Activated T-helper 1 cell treated with anti-CD3 and anti-CD28 coated beads, Interleukin-12 subunit alpha, Interleukin-12 subunit beta, Interleukin-2, Interleukin-4 antibody, amounts not matched to agents 30 ng/mL and 10 ng/mL and 1 ng/mL, durations not matched to agents 14 hours and 24 hours and 36 hours (primary cell): ENCODE measurements at regions of chr11 and their contacts with region 1.

Region 1: GRCh38 chr11:124953753-124954589 is at the start of gene CCDC15:
- DNase-seq: peak; percentile 95
- H3K4me3 Mint-ChIP-seq: no peak within 1 kb of the TSS
- H3K27ac Mint-ChIP-seq: no peak within 1 kb of the TSS
- H3K4me1 Mint-ChIP-seq: no peaks in the 10 kb centered on the region
- H3K27me3 Mint-ChIP-seq: no peaks in the 10 kb centered on the region
- total RNA-seq, gene CCDC15: 3.1 and 3.4 TPM in 2 replicates

Region 2: DNA sequence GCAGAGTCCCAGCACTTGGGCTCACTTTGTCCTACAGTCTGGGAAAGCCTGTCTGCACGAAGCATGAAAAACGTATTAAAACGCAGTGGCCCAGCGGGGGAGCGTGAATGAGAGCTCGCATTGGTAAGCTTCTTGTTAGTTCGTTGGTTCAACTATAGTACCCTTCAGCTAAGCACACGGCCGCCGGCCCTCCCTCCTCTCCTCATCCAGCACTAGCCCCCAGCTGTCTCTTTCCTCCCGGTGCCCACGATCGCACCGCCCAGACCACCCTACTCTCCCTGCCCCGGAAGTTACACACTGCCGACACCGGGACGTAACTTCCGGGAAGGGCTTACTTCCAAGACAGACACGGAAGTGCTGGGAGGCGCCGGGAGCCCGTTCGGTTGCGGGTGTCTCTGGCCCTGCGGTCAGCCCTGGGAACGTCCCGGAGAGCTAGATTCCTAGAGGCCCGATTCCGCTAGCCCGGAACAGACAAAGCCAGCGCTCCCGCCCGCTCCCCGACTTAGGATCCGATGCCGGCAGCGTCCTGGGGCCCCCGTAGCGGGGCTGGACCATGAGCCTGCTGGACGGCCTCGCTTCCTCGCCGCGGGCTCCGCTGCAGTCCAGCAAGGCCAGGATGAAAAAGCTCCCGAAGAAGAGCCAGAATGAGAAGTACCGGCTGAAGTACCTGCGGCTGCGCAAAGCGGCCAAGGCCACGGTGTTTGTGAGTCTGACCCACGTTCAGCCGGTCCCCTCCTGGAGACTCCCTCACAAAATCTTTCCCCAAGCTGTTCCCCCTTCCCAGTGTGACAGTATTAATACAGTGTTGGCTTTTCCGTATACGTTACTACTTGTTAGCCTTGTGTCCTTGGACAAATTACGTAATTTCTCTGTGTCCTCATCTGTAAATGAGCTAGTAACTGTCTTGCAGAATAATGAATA is 331.2 kb before region 1 on chr11 and contains the start of gene TBRG1:
- intact Hi-C with region 1: loop called (anchors 1 kb)
- DNase-seq: peak; percentile 80
- H3K4me3 Mint-ChIP-seq: peak within 1 kb of the TSS; percentile 97
- H3K27ac Mint-ChIP-seq: peak within 1 kb of the TSS; percentile 95
- H3K4me1 Mint-ChIP-seq: peaks cover 29% of the 10 kb centered on the region
- H3K27me3 Mint-ChIP-seq: peaks cover 14% of the 10 kb centered on the region
- total RNA-seq, gene TBRG1: 35.1 and 35.4 TPM in 2 replicates

Region 3: GRCh38 chr11:124800226-124800929 is 153.6 kb before region 1 on chr11 and contains the start of gene MSANTD2:
- intact Hi-C with region 1: loop called (anchors 1 kb)
- DNase-seq: peak; percentile 79
- H3K4me3 Mint-ChIP-seq: peak within 1 kb of the TSS; percentile 91
- H3K27ac Mint-ChIP-seq: peak within 1 kb of the TSS; percentile 92
- H3K4me1 Mint-ChIP-seq: peaks cover 28% of the 10 kb centered on the region
- H3K27me3 Mint-ChIP-seq: peaks cover 8% of the 10 kb centered on the region
- total RNA-seq, gene MSANTD2: 8.9 and 9.7 TPM in 2 replicates

Region 4: DNA sequence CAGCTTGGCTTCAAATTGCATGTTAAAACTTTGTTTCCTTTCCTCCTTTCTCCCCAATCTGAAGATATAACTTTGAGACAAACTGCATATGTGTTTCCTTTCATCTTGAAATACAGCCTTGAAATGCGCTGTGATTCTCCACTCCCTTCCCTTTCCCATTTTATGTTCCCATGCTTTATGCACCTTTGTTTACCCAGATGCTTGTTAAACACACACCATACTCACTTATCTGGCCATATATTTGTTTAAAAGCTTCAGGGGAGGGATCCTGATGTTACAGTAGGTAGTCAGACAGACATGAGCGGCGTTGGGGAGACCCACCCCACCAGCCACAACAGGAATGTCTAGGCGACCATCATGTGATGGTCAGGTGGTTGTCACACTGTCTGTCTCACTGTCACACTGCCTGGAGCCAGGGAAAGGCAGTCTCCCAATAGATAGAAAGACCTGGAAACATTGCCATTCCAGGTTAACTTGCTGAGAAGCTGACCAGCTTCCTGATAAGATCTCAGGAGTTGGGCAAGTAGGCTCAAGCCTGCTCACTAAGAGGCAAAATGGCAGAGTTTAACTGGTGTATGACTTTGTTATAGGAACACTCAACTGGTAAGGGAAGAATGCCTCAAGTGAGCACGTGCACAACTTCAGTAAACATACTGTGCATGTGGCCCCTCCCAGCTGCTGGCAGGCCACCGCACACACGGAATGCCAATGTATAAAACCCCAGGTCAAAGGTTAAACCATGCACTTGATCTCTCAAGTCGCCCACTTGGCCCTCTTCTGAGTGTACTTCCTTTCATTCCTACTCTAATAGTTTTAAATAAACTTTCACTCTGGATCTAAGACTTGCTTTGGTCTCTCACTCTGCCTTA is 130.2 kb before region 1 on chr11:
- intact Hi-C with region 1: no loop called
- DNase-seq: no peak
- H3K4me3 Mint-ChIP-seq: no peak overlapping the region
- H3K27ac Mint-ChIP-seq: no peak overlapping the region
- H3K4me1 Mint-ChIP-seq: no peaks in the 10 kb centered on the region
- H3K27me3 Mint-ChIP-seq: peaks cover 25% of the 10 kb centered on the region

Region 5: DNA sequence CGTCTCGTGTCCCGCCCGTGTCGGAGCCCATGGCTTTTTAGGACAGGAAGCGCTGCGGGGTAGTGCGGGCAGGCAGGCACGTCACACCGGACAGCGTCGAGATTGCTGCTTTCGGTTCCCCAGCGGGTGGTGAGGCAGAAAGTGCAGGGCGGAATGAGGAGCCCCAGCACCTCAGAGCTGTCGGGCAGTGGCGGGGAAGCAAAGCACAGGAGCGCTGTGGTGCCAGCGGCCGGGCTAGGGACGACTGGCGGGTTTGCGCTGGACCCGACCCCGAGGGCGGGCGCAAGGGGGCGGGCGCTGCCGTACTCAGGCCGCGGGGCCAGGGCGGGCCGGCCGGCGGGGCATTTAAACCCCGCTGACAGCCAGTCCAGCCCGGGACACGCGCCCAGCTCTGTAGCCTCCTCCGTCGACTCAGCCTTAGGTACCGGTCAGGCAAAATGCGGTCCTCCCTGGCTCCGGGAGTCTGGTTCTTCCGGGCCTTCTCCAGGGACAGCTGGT is 109.0 kb after region 1 on chr11 and contains the start of gene SLC37A2:
- intact Hi-C with region 1: loop called (anchors 2 kb)
- DNase-seq: peak; percentile 40
- H3K4me3 Mint-ChIP-seq: peak within 1 kb of the TSS; percentile 80
- H3K27ac Mint-ChIP-seq: no peak within 1 kb of the TSS
- H3K4me1 Mint-ChIP-seq: peaks cover 10% of the 10 kb centered on the region
- H3K27me3 Mint-ChIP-seq: peaks cover 44% of the 10 kb centered on the region
- total RNA-seq, gene SLC37A2: 0.13 and 0.17 TPM in 2 replicates

Region 6: DNA sequence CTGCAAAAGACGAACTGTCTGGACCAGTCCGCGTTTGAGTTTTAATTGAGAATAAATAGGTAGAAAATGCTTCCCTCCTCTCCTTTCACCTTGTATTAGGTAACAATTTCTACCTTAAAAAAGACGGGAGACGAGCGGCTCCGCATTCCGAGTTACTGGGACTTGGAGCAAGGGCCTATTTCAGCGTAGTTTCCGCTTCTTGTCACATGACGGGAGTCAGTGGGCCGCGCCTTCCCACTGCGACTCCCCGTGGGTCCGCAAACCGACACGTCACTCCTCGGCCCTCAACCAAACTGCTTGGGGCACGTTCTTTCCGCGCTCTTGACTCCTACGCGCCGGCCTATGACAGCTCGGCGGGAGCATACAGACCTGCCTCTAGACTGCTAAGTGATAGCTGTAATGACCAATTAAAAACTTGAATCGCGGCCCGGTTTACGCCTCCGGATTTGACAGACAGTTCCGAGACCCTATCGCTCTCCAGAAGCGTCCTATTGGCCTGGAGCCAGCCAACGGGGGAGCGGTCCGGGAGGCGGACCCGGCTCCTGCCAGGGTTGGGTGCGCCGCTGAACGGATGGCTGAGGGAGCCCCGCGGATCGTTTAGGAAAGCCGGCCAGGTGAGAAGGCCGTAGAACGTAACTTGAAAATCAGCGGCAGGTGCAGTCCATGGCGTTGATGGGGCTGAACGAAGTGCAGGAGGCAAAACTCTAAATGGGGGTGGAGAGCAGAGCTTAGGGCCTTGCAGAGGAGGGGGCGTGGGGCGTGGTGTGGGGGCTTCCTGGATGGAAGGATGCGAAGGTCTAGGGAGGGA is 638.5 kb after region 1 on chr11 and contains the start of gene STT3A:
- intact Hi-C with region 1: loop called (anchors 5 kb)
- DNase-seq: peak; percentile 98
- H3K4me3 Mint-ChIP-seq: peak within 1 kb of the TSS; percentile 98
- H3K27ac Mint-ChIP-seq: peak within 1 kb of the TSS; percentile 94
- H3K4me1 Mint-ChIP-seq: peaks cover 50% of the 10 kb centered on the region
- H3K27me3 Mint-ChIP-seq: no peaks in the 10 kb centered on the region
- total RNA-seq, gene STT3A: 164 and 171 TPM in 2 replicates